ENCODE measurements at regions of chr17 and their contacts with region 1.

Region 1: DNA sequence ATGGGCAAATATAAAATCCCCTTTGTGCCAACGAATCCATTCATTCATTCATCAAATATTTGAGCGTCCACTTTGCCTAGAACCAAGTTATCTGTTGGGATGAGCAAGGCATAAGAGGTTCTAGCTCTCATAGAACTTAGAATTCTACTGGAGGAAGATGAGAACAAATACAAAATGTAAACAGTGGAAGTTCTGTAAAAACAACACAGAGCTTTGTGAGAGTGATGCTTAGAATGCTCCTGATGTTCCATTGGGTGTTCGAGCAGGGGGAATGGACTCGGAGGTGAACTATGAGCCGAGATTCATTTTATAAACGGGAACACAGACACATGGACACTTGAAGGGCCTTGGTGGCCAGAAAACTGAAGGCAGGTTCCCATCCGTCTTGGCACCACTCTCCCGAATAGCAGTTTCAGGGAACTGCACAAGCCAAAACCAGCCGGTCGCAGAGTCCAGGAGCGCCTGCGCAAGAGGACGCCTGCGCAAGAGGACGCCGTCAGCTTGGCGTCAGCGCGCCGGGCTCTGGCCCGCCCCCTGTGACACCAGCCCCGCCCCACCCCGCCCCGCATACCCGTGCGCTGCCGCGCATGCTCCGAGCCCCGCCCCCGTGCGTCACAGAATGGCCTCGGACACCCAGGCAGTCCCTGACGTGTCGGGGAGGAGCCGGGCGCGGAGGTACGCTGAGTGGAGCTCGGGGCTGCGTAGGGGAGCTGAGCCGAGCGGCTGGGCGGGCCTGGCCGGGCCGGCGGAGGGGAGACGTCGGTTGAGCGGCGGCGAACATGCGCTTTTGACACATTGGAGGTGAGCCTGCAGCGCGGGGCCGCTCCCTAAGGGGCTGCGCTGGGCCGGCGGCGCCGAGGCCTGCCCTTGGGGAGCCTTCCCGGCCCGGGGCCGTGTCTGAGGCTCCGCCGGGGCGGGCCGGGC is at the start of gene NDEL1:
- DNase-seq: peak; percentile 94
- ATAC-seq: peak; percentile 98
- H3K4me3 ChIP-seq: peak within 1 kb of the TSS; percentile 91
- H3K27ac ChIP-seq: peak within 1 kb of the TSS; percentile 78
- H3K4me1 ChIP-seq: no peaks in the 10 kb centered on the region; the same call in 1 of the 2 replicates
- H3K27me3 ChIP-seq: no peaks in the 10 kb centered on the region
- CTCF ChIP-seq: no peak
- total RNA-seq, gene NDEL1: 32.7 and 46.7 TPM in 2 replicates

Region 2: GRCh38 chr17:8383143-8383822 is 52.2 kb before region 1 on chr17 and contains the start of gene RPL26:
- CTCF ChIA-PET with region 1: interaction called, 12 read pairs
- POLR2A ChIA-PET with region 1: interaction called, 3 read pairs
- intact Hi-C with region 1: loop called (anchors 1 kb)
- DNase-seq: peak; percentile 96
- ATAC-seq: peak; percentile 80
- H3K4me3 ChIP-seq: peak within 1 kb of the TSS; percentile 96
- H3K27ac ChIP-seq: peak within 1 kb of the TSS; percentile 67
- H3K4me1 ChIP-seq: peaks cover 27% of the 10 kb centered on the region
- H3K27me3 ChIP-seq: no peaks in the 10 kb centered on the region
- CTCF ChIP-seq: peak; percentile 86
- total RNA-seq, gene RPL26: 1,030 and 1,369 TPM in 2 replicates

Region 3: GRCh38 chr17:8447799-8448198 is 12.3 kb after region 1 on chr17:
- CTCF ChIA-PET with region 1: no interaction called
- POLR2A ChIA-PET with region 1: no interaction called
- intact Hi-C with region 1: no loop called
- DNase-seq: no peak
- ATAC-seq: no peak
- H3K4me3 ChIP-seq: no peak overlapping the region
- H3K27ac ChIP-seq: no peak overlapping the region
- H3K4me1 ChIP-seq: no peaks in the 10 kb centered on the region
- H3K27me3 ChIP-seq: no peaks in the 10 kb centered on the region
- CTCF ChIP-seq: no peak

Region 4: GRCh38 chr17:8485491-8485890 is 50.0 kb after region 1 on chr17:
- CTCF ChIA-PET with region 1: no interaction called
- POLR2A ChIA-PET with region 1: interaction called, 10 read pairs
- intact Hi-C with region 1: no loop called
- DNase-seq: no peak
- ATAC-seq: no peak
- H3K4me3 ChIP-seq: no peak overlapping the region
- H3K27ac ChIP-seq: no peak overlapping the region
- H3K4me1 ChIP-seq: no peaks in the 10 kb centered on the region
- H3K27me3 ChIP-seq: no peaks in the 10 kb centered on the region
- CTCF ChIP-seq: no peak